ENCODE measurements at regions of chr11 and their contacts with region 1.

Region 1: DNA sequence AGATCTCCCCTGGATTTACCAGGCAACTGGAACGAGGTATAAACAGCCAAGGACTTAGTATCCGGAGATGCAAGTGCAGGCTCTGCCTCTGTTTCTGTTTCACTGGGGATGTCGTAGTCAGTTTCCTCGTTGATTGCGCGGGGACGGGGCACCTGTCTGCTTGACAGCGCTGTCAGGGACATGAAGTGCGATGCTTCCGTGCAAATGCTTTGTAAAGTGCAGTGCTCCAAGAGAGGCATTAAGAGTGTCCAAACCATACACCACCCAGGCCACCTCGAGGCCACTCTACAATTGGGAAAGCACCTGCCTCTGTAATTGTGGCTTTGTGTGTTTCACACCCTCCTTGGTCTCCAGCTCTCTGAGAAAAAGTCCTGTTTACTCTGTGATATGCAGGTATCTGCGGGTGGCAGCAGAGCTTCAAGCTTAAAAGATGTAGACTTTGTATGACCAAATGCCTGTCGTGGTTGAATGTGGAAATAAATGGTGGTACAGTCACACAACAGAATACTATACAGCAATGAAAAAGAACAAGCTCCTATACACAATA is 18.6 kb upstream of the CD5 start:
- DNase-seq: peak; percentile 45 to 85 (median 77)
- ATAC-seq: peak; percentile 79
- H3K4me3 ChIP-seq: peak overlapping the region; percentile 40
- H3K4me3 Mint-ChIP-seq: peak overlapping the region; percentile 74 to 90 (median 85)
- H3K27ac ChIP-seq: peak overlapping the region; percentile 80
- H3K27ac Mint-ChIP-seq: peak overlapping the region; percentile 97 to 100 (median 99)
- H3K4me1 ChIP-seq: peaks cover 28 to 51% of the 10 kb centered on the region in 2 donors
- H3K4me1 Mint-ChIP-seq: peaks cover 39 to 64% (median 54%) of the 10 kb centered on the region in 7 donors
- H3K27me3 ChIP-seq: no peaks in the 10 kb centered on the region
- H3K27me3 Mint-ChIP-seq: no peaks in the 10 kb centered on the region

Region 2: GRCh38 chr11:60563553-60564235 is 520.0 kb before region 1 on chr11:
- CTCF ChIA-PET with region 1: no interaction called
- POLR2A ChIA-PET with region 1: no interaction called
- intact Hi-C with region 1: no loop called
- DNase-seq: no peak
- ATAC-seq: no peak
- H3K4me3 ChIP-seq: no peak overlapping the region
- H3K4me3 Mint-ChIP-seq: no peak overlapping the region
- H3K27ac ChIP-seq: no peak overlapping the region
- H3K27ac Mint-ChIP-seq: no peak overlapping the region
- H3K4me1 ChIP-seq: no peaks in the 10 kb centered on the region
- H3K4me1 Mint-ChIP-seq: no peaks in the 10 kb centered on the region
- H3K27me3 ChIP-seq: no peaks in the 10 kb centered on the region
- H3K27me3 Mint-ChIP-seq: peaks cover 0 to 20% (median 12%) of the 10 kb centered on the region in 5 donors

Region 3: DNA sequence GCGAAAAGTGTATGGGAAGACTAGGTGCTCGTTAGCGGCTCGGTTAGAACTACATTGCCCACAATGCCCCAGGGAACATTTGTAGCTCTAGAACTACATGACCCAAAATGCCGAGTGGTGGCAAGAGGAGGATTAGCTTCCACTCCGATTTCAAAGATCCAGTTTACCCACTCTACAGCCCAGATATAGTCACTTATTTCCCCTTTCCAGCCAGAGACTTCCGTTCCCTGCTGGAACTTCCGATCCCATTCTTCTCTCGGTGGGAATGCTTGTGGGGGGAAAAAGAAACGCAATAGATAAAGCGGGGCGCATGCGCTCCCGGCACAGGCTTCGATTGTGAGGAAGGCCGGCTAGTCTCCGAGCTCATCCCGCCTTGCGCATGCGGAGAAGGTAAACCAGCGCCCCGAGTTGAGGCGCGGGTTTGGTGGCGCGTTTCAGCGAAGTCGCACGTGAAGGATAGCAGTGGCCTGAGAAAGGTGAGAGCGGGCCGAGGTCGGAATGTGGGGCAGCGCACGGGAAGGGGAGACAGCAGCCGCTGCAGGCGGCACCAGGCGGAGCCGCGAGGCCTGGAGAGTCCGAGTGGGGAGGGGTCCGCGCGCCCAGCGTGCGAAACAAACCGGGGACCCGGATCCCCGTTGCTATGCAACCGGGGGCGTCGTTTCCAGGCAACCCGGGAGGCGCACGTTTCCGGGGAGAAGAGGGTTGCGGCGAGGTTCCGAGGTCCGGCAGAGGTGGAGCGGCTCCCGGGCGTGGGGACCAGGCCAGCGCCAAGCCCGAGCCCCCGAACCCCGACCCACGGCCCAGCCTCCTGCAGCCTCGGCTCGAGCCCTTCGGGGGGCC is 169.7 kb before region 1 on chr11 and contains the start of gene TMEM109:
- CTCF ChIA-PET with region 1: no interaction called
- POLR2A ChIA-PET with region 1: interaction called, 5 read pairs
- intact Hi-C with region 1: loop called (anchors 2 to 5 kb)
- DNase-seq: peak; percentile 77 to 93 (median 91)
- ATAC-seq: peak; percentile 76
- H3K4me3 ChIP-seq: peak within 1 kb of the TSS; percentile 94
- H3K4me3 Mint-ChIP-seq: peak within 1 kb of the TSS; percentile 91 to 99 (median 98)
- H3K27ac ChIP-seq: peak within 1 kb of the TSS; percentile 94
- H3K27ac Mint-ChIP-seq: peak within 1 kb of the TSS; percentile 91 to 99 (median 97)
- H3K4me1 ChIP-seq: peaks cover 43 to 45% of the 10 kb centered on the region in 2 donors
- H3K4me1 Mint-ChIP-seq: peaks cover 39 to 77% (median 60%) of the 10 kb centered on the region in 7 donors
- H3K27me3 ChIP-seq: no peaks in the 10 kb centered on the region
- H3K27me3 Mint-ChIP-seq: peaks cover 0 to 11% (median 0%) of the 10 kb centered on the region in 5 donors
- total RNA-seq, gene TMEM109: 49.8 to 99.8 (median 56.9) TPM

Region 4: GRCh38 chr11:60985991-60986915 is 97.4 kb before region 1 on chr11:
- CTCF ChIA-PET with region 1: interaction called, 3 read pairs
- POLR2A ChIA-PET with region 1: interaction called, 60 read pairs
- intact Hi-C with region 1: loop called in 1 of 2 experiments (anchors 5 kb)
- DNase-seq: peak; percentile 59 to 99 (median 97)
- ATAC-seq: peak; percentile 93
- H3K4me3 ChIP-seq: peak overlapping the region; percentile 42
- H3K4me3 Mint-ChIP-seq: peak overlapping the region; percentile 75 to 96 (median 88)
- H3K27ac ChIP-seq: peak overlapping the region; percentile 96
- H3K27ac Mint-ChIP-seq: peak overlapping the region; percentile 91 to 100 (median 99)
- H3K4me1 ChIP-seq: peaks cover 62 to 88% of the 10 kb centered on the region in 2 donors
- H3K4me1 Mint-ChIP-seq: peaks cover 49 to 99% (median 94%) of the 10 kb centered on the region in 7 donors
- H3K27me3 ChIP-seq: no peaks in the 10 kb centered on the region
- H3K27me3 Mint-ChIP-seq: no peaks in the 10 kb centered on the region

Region 5: DNA sequence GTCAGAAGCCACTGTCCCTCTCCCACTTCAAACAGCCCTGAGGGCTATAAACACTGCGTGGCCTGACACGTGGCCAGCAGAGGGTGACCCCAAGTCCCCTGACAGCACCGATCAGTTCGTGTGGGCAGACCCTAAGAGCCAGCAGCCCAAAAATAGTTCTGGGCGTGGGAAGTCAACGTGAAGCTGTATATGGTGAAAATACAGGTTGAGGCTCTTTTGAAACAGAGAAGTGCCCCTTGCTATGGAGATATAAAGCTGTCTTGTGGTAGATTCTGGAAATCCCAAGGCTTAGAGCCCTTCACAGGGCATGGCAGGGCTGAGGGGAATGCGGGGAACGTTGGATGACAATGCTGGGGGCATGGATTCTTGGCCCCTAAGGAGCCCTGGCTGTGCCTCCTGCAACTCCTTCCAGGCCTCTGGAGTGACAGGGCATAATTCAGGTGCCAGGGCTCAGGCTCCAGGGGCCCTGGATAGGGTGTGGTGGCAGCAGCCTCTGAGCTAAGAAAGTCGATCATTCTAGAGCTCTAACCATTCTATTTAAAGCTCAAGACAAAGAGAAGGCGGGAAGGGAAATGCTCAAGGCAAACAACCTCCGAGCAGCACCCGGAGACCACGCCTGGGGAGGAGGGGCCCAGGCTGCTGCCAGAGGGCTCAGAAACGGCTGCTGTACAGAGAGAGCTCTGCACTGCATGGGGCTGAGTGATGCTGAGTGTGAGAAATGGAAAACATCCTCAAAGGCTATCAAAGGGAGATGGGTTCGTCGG is 41.7 kb before region 1 on chr11:
- CTCF ChIA-PET with region 1: interaction called, 31 read pairs
- POLR2A ChIA-PET with region 1: interaction called, 222 read pairs
- intact Hi-C with region 1: loop called in 1 of 2 experiments (anchors 2 kb)
- DNase-seq: peak; percentile 60 to 97 (median 96)
- ATAC-seq: peak; percentile 98
- H3K4me3 ChIP-seq: peak overlapping the region; percentile 20
- H3K4me3 Mint-ChIP-seq: peak overlapping the region; percentile 70 to 85 (median 76)
- H3K27ac ChIP-seq: peak overlapping the region; percentile 81
- H3K27ac Mint-ChIP-seq: peak overlapping the region; percentile 96 to 100 (median 98)
- H3K4me1 ChIP-seq: peaks cover 22 to 49% of the 10 kb centered on the region in 2 donors
- H3K4me1 Mint-ChIP-seq: peaks cover 40 to 70% (median 59%) of the 10 kb centered on the region in 7 donors
- H3K27me3 ChIP-seq: no peaks in the 10 kb centered on the region
- H3K27me3 Mint-ChIP-seq: no peaks in the 10 kb centered on the region

Region 6: DNA sequence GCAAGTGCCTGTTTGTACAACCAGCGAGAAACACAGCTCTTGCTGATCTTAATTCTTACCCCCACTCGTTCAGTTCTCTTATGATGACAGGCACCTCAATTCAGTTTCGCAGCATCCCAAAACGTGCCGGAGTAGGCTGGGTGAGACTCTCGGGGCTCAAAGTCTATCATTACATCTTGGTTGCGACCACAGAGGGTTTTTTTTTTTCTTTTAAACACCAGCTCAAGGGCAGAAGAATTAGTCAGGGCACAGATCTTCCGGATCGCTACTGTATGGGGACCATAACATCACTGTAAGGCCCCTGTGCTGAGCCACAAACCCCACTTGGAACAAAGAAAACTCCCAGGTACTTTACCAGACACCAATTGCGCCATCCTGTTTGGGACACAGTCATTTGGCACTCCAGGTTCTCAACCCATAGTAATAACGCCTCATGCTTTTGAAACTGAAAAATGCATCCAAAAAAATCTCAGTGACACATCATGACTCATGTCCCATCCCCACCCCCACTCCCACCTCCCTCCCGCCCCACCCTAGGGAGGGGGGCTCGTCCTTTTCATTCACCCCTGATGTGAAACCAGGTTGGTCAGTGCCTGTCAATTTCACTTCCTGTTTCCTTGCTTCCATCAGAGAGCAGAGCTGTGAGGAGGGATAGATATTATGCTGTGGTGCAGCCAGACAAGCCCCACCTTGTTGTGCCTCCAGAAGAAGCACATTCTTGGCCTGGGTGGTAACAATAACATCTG is 22.4 kb before region 1 on chr11:
- CTCF ChIA-PET with region 1: interaction called, 30 read pairs
- POLR2A ChIA-PET with region 1: interaction called, 233 read pairs
- intact Hi-C with region 1: loop called (anchors 1 to 2 kb)
- DNase-seq: peak in 7 of 9 donors; percentile 47 to 89 (median 56)
- ATAC-seq: peak; percentile 86
- H3K4me3 ChIP-seq: peak overlapping the region; percentile 34
- H3K4me3 Mint-ChIP-seq: peak overlapping the region; percentile 75 to 94 (median 83)
- H3K27ac ChIP-seq: peak overlapping the region; percentile 72
- H3K27ac Mint-ChIP-seq: peak overlapping the region; percentile 88 to 99 (median 96)
- H3K4me1 ChIP-seq: peaks cover 24 to 48% of the 10 kb centered on the region in 2 donors
- H3K4me1 Mint-ChIP-seq: peaks cover 47 to 83% (median 80%) of the 10 kb centered on the region in 7 donors
- H3K27me3 ChIP-seq: no peaks in the 10 kb centered on the region
- H3K27me3 Mint-ChIP-seq: no peaks in the 10 kb centered on the region

Region 7: GRCh38 chr11:61111786-61112517 is 28.3 kb after region 1 on chr11:
- CTCF ChIA-PET with region 1: interaction called, 29 read pairs
- POLR2A ChIA-PET with region 1: interaction called, 113 read pairs
- intact Hi-C with region 1: loop called (anchors 5 kb)
- DNase-seq: peak in 8 of 9 donors; percentile 57 to 78 (median 74)
- ATAC-seq: peak; percentile 81
- H3K4me3 ChIP-seq: peak overlapping the region; percentile 31
- H3K4me3 Mint-ChIP-seq: peak overlapping the region in 9 of 10 donors; percentile 82 to 93 (median 86)
- H3K27ac ChIP-seq: peak overlapping the region; percentile 78
- H3K27ac Mint-ChIP-seq: peak overlapping the region in 7 of 9 donors; percentile 81 to 98 (median 92)
- H3K4me1 ChIP-seq: peaks cover 58 to 93% of the 10 kb centered on the region in 2 donors
- H3K4me1 Mint-ChIP-seq: peaks cover 81 to 100% (median 97%) of the 10 kb centered on the region in 7 donors
- H3K27me3 ChIP-seq: no peaks in the 10 kb centered on the region
- H3K27me3 Mint-ChIP-seq: no peaks in the 10 kb centered on the region

Region 8: DNA sequence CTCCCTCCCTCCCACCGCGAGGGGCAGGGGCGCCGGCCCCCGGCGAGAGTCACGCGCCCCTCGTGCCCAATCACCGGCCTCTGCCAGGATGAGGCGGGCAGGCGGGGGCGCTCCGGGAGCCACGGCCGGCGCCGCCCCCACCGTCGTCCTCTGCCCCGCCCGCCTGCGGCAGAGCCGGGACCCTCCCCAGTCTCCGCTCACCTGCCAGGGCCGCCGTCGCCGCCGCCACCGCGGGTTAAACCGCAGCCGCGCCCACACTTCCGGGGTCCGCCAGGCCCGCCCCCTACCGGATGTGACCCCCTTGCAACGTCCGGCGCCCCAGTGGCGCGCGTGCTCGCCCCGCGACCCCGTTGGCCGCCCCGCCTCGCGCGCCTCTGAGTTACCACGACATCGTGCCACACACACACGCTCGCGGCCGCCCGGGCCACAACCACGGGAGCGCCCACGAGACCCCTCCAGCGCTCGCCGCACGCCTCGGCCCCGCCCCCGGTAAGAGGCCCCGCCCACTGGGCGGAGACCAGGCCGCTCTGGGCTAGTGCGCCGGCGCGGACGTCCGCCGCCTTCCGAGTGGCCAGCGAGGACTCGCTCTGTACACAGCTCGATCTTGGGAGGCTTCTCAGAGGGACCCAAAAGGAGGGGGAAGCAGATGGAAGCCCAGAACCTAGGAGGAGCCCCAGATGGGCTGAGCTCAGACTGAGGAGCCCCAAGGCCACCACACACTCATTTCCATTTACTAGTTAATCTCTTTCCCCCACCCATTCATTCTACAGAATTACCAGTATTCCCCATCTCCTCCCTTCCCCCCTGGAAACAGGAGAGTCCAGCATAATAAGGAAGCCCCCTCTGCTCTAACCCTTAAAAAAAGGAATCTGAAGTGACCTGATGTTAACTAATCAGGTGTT is 77.8 kb after region 1 on chr11 and contains the start of gene VPS37C:
- CTCF ChIA-PET with region 1: no interaction called
- POLR2A ChIA-PET with region 1: no interaction called
- intact Hi-C with region 1: loop called in 1 of 2 experiments (anchors 2 kb)
- DNase-seq: peak; percentile 80 to 99 (median 87)
- ATAC-seq: peak; percentile 83
- H3K4me3 ChIP-seq: peak within 1 kb of the TSS; percentile 74
- H3K4me3 Mint-ChIP-seq: peak within 1 kb of the TSS; percentile 85 to 96 (median 90)
- H3K27ac ChIP-seq: peak within 1 kb of the TSS; percentile 78
- H3K27ac Mint-ChIP-seq: peak within 1 kb of the TSS; percentile 84 to 96 (median 94)
- H3K4me1 ChIP-seq: peaks cover 7 to 14% of the 10 kb centered on the region in 2 donors
- H3K4me1 Mint-ChIP-seq: peaks cover 31 to 62% (median 48%) of the 10 kb centered on the region in 7 donors
- H3K27me3 ChIP-seq: no peaks in the 10 kb centered on the region
- H3K27me3 Mint-ChIP-seq: no peaks in the 10 kb centered on the region
- total RNA-seq, gene VPS37C: 4.1 to 12.0 (median 7.9) TPM